ENCODE measurements at regions of chr7 and their contacts with region 1.

Region 1: DNA sequence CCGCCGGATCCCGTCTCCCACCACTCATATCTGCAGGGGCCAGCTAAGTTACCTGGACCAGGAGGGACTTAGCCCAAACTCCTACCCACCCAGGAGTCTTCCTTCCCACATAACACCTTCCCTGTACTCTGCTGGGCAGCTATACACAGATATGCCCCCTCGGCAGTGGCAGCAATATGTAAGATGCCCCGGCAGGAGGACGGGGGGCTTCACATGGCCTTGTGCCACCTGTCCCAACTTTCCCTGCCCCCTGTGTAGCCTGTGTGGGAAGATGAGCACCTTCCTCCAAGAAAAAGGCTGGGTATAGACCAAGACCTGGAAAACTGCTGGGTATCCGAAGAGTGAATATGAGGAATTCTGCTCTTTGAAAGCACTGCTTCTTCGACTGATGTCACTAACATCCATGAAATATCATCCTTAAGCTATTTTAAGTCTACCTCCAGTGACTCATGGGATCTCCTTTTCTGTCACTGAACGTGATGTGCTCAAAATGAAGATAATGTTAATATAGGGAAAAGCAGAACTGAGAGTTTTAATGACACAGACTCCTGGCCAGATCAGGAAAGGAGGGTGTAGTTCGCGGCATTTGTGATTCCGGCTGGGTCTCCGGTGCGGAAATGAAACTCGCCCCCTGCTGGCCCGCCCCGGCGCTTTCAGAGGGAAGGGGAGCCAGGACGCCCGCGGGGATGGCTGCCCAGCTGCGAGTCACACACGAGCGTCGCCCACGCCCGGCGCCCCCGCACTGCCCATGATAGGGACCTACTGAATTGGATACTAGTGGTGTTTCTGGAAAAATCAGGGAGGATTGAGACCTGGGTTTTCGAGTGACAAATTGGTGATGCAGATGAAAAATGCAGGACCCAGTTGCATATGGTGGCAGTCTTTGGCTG is 256.9 kb upstream of the NFE2L3 start:
- DNase-seq: peak in 1 of 2 experiments; percentile 87
- H3K4me3 ChIP-seq: peak overlapping the region; percentile 54 to 76 (median 62)
- H3K27ac ChIP-seq: no peak overlapping the region
- H3K4me1 ChIP-seq: peaks cover 0 to 7% (median 2%) of the 10 kb centered on the region in 4 experiments; a peak in 3 of 7 replicates
- H3K27me3 ChIP-seq: no peaks in the 10 kb centered on the region
- CTCF ChIP-seq: peak; percentile 50 to 65 (median 53)
- EP300 ChIP-seq: no peak
- POLR2A ChIP-seq: no peak
- RAD21 ChIP-seq: peak; percentile 15 to 43; a peak in 2 of 4 replicates

Region 2: DNA sequence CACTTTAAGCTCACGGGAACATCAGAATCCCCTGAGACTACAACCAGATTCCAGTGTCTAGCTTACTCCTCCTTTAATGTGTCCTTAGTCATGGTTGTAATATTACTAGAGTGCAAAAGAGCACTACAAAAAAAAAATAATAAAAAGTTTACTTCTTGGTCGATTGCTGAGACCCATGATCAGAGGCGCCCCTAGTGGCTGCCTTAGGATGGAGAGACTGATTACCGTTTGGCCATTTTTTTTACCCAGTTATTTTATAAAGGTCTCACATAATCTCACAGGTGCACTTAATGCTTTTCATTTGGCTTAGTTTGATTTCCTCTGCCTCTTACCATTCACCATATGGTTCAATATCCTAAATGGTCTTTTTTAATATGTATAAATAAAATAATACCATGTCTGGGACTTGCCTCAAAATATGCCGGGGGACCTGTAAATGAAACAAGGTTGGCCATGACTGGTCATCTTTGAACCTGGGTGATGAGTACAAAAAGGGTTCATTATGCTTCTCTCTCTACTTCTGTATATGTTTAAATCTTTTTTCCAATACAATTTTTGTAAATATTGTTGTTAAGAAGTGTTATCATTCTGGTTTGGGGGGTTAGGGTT is 74.6 kb before region 1 on chr7:
- CTCF ChIA-PET with region 1: no interaction called
- POLR2A ChIA-PET with region 1: no interaction called
- DNase-seq: no peak
- H3K4me3 ChIP-seq: no peak overlapping the region
- H3K27ac ChIP-seq: no peak overlapping the region
- H3K4me1 ChIP-seq: no peaks in the 10 kb centered on the region
- H3K27me3 ChIP-seq: no peaks in the 10 kb centered on the region
- CTCF ChIP-seq: peak; percentile 25 to 61 (median 50)
- EP300 ChIP-seq: no peak
- POLR2A ChIP-seq: no peak
- RAD21 ChIP-seq: peak; percentile 38 to 54; a peak in 3 of 4 replicates

Region 3: GRCh38 chr7:25844102-25844870 is 50.9 kb before region 1 on chr7:
- CTCF ChIA-PET with region 1: no interaction called
- POLR2A ChIA-PET with region 1: no interaction called
- DNase-seq: no peak
- H3K4me3 ChIP-seq: no peak overlapping the region
- H3K27ac ChIP-seq: no peak overlapping the region
- H3K4me1 ChIP-seq: no peaks in the 10 kb centered on the region; a peak in 1 of 7 replicates
- H3K27me3 ChIP-seq: no peaks in the 10 kb centered on the region
- CTCF ChIP-seq: no peak
- EP300 ChIP-seq: no peak
- POLR2A ChIP-seq: no peak
- RAD21 ChIP-seq: no peak

Region 4: DNA sequence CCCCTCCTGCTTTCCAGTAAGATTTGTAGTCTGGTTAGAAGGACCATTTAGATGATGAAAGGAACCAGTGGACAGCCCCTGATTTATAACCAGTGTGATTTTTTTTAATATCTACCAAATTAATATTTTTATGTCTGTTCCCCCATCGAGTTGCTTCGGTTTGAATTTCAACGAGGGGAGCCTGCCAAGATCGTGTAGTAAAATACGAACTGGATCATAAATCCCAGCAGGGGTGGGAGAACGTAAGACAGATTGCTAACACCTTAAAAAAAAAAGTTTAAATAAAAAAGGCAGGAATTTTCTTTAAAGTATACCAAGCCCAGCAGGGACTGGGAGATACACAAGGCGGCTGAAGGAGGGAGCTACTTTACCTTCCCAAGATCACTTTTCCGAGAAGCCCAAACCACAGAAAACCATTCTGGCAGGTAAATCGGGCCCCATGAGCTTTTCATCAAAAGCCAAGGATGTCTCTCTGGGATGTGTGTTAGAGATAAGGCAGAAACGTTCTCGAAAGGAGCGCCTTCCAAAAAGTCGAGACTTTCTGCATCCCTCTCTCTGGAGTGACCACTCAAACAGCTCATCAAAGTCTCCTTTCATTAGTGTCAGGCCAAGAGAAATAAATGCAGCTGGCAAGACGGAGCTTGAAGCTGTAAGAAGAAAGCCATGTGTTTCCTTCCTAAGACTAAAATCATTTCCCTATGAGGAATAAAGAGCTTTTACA is 13.7 kb before region 1 on chr7:
- CTCF ChIA-PET with region 1: interaction called, 12 read pairs
- POLR2A ChIA-PET with region 1: no interaction called
- DNase-seq: no peak
- H3K4me3 ChIP-seq: no peak overlapping the region
- H3K27ac ChIP-seq: no peak overlapping the region
- H3K4me1 ChIP-seq: no peaks in the 10 kb centered on the region
- H3K27me3 ChIP-seq: no peaks in the 10 kb centered on the region; a peak in 1 of 7 replicates
- CTCF ChIP-seq: no peak
- EP300 ChIP-seq: no peak
- POLR2A ChIP-seq: no peak
- RAD21 ChIP-seq: no peak

Region 5: DNA sequence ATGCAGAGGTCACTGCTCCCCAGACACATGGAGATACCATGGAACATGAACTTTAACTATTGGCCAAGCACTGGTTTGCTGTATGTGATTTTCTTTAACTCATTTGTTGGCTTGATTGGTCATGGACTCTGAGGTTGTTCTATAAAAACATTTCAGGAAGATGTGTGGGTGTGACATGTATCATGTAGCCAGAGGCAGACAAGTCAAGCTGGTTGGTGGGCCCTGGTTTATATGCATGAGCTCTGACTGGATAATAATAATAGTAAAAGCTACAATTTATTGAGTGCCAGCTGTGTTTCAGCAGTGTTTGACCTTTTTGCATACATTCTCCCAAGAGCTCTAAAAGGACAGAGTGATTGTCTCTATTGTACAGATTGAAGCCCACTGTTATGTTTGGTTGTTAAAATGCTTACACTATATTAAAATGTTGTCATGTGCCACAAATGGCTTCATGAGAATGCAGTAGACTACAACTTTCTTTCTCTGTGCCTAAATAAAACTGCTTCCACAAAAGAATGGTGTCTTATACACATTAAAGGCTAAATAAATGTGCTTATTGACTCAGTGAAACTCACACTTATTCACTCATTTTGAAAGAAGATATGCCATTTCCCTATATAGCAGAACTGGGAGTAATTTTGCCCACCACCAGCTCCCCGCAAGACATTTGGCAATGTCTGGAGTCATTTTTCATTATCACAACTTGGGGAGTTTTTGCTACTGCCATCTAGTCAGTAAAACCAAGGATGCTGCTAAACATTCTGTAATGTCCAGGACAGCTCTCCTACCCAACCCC is 13.2 kb after region 1 on chr7:
- CTCF ChIA-PET with region 1: interaction called, 36 read pairs
- POLR2A ChIA-PET with region 1: interaction called, 4 read pairs
- DNase-seq: no peak
- H3K4me3 ChIP-seq: no peak overlapping the region
- H3K27ac ChIP-seq: no peak overlapping the region
- H3K4me1 ChIP-seq: peaks cover 2 to 7% (median 4%) of the 10 kb centered on the region in 4 experiments; a peak in 4 of 7 replicates
- H3K27me3 ChIP-seq: no peaks in the 10 kb centered on the region
- CTCF ChIP-seq: no peak
- EP300 ChIP-seq: no peak
- POLR2A ChIP-seq: no peak
- RAD21 ChIP-seq: no peak

Region 6: DNA sequence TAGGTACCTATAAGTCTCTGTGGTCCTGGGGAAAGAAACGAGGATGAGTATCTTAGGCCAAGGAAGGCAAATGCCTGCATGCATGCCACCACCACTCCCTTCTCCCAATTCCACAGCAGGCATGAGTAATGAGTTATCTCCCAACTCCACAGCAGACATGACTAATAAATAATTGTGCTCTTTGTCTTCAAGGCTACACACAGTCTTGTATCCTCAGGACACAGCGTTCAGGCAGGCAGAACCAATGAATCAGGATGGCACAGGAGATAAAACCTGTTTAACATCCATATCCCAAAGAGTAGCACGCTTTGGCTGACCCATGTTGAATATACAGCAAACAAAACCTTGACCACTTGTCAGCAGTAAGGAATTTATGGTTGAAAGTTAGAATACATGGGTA is 27.1 kb after region 1 on chr7:
- CTCF ChIA-PET with region 1: no interaction called
- POLR2A ChIA-PET with region 1: no interaction called
- DNase-seq: no peak
- H3K4me3 ChIP-seq: no peak overlapping the region
- H3K27ac ChIP-seq: no peak overlapping the region
- H3K4me1 ChIP-seq: peaks cover 0 to 4% (median 0%) of the 10 kb centered on the region in 4 experiments; a peak in 1 of 7 replicates
- H3K27me3 ChIP-seq: no peaks in the 10 kb centered on the region
- CTCF ChIP-seq: no peak
- EP300 ChIP-seq: no peak
- POLR2A ChIP-seq: no peak
- RAD21 ChIP-seq: no peak

Region 7: DNA sequence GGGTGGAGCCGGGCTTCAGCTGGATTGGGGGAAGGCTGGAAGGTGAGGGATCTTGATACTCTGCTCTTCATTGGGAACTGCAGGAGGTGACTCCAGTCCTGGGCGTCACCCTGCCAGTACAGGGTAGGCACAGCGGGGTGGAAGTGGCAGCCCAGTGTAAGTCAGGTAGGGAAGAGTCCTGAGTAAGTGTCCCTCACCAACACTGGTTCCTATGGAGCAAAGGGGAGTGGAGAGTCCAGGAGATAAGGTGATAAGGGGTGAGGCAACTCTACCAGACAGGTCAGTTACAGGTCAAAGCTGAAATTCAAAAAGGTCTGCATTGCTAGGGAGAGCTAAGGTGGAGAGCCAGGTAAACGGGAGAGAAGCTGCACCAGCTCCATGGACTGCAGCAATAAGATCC is 111.3 kb after region 1 on chr7:
- CTCF ChIA-PET with region 1: no interaction called
- POLR2A ChIA-PET with region 1: no interaction called
- DNase-seq: no peak
- H3K4me3 ChIP-seq: no peak overlapping the region
- H3K27ac ChIP-seq: no peak overlapping the region
- H3K4me1 ChIP-seq: no peaks in the 10 kb centered on the region
- H3K27me3 ChIP-seq: no peaks in the 10 kb centered on the region; a peak in 2 of 7 replicates
- CTCF ChIP-seq: no peak
- EP300 ChIP-seq: no peak
- POLR2A ChIP-seq: no peak
- RAD21 ChIP-seq: no peak

Region 8: GRCh38 chr7:26061688-26062150 is 166.6 kb after region 1 on chr7:
- CTCF ChIA-PET with region 1: interaction called, 10 read pairs
- POLR2A ChIA-PET with region 1: interaction called, 3 read pairs
- DNase-seq: peak; percentile 53 to 87
- H3K4me3 ChIP-seq: no peak overlapping the region
- H3K27ac ChIP-seq: no peak overlapping the region
- H3K4me1 ChIP-seq: peaks cover 0 to 3% (median 2%) of the 10 kb centered on the region in 4 experiments; a peak in 3 of 7 replicates
- H3K27me3 ChIP-seq: no peaks in the 10 kb centered on the region
- CTCF ChIP-seq: peak; percentile 62 to 90 (median 80)
- EP300 ChIP-seq: no peak
- POLR2A ChIP-seq: no peak
- RAD21 ChIP-seq: peak; percentile 76 to 87

Region 9: GRCh38 chr7:26078437-26079336 is 183.5 kb after region 1 on chr7:
- CTCF ChIA-PET with region 1: interaction called, 21 read pairs
- POLR2A ChIA-PET with region 1: no interaction called
- DNase-seq: peak; percentile 36 to 87
- H3K4me3 ChIP-seq: peak overlapping the region in 1 of 4 experiments; percentile 3; a peak in 1 of 8 replicates
- H3K27ac ChIP-seq: no peak overlapping the region
- H3K4me1 ChIP-seq: peaks cover 1 to 7% (median 3%) of the 10 kb centered on the region in 4 experiments; a peak in 3 of 7 replicates
- H3K27me3 ChIP-seq: no peaks in the 10 kb centered on the region; a peak in 2 of 7 replicates
- CTCF ChIP-seq: peak; percentile 49 to 64 (median 56)
- EP300 ChIP-seq: no peak
- POLR2A ChIP-seq: no peak
- RAD21 ChIP-seq: peak; percentile 46 to 66; a peak in 3 of 4 replicates

Region 10: DNA sequence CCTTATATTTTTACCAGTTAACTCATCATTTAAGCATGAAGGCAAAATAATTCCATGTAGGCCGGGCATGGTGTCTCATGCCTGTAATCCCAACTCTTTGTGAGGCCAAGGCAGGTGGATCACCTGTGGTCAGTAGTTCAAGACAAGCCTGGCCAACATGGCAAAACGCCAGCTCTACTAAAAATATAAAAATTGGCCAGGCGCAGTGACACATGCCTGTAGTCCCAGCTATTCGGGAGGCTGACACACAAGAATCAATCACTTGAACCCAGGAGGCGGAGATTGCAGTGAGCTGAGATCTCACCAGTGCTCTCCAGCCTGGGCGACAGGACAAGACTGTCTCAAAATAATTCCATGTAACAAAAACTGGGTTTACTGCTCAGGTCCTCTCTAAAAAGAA is 287.1 kb after region 1 on chr7:
- CTCF ChIA-PET with region 1: interaction called, 14 read pairs
- POLR2A ChIA-PET with region 1: interaction called, 19 read pairs
- DNase-seq: no peak
- H3K4me3 ChIP-seq: no peak overlapping the region
- H3K27ac ChIP-seq: no peak overlapping the region
- H3K4me1 ChIP-seq: peaks cover 0 to 5% (median 0%) of the 10 kb centered on the region in 4 experiments; a peak in 1 of 7 replicates
- H3K27me3 ChIP-seq: no peaks in the 10 kb centered on the region
- CTCF ChIP-seq: no peak
- EP300 ChIP-seq: no peak
- POLR2A ChIP-seq: no peak
- RAD21 ChIP-seq: no peak

Region 11: DNA sequence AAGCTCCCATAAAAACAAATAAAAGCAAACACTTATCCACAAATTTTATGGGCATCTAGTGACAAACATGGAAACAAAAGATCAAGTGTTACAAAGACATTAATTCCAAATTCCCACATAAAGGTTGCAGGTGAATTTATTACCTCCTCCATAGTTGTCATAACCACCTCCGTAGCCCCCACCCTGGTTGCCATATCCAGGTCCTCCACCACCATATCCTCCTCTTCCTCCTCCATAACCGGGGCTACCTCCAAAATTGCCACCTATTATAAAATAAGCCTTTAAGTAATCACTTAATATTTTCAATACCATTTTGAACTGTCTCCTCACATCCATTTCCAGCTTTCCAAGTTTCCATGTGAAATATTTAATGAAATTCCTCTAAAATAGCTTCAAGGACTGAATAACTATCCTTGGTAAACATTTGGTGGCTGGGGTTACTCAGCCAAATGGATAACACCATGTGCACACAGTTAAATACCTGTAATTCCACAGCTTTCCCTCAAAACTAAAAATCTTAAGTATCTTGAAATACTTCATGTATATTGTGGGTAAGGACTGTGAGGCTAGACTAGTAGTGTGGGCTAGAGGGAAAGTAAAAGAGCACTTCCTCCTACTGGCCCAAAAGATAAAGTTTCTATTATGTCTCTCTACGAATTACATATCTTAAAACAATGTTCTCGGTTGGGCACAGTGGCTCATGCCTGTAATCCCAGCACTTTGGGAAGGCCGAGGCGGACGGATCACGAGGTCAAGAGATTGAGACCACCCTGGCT is 298.5 kb after region 1 on chr7:
- CTCF ChIA-PET with region 1: interaction called, 21 read pairs
- POLR2A ChIA-PET with region 1: interaction called, 19 read pairs
- DNase-seq: no peak
- H3K4me3 ChIP-seq: no peak overlapping the region
- H3K27ac ChIP-seq: no peak overlapping the region
- H3K4me1 ChIP-seq: peaks cover 0 to 6% (median 0%) of the 10 kb centered on the region in 4 experiments; a peak in 3 of 7 replicates
- H3K27me3 ChIP-seq: no peaks in the 10 kb centered on the region
- CTCF ChIP-seq: no peak
- EP300 ChIP-seq: no peak
- POLR2A ChIP-seq: peak in 1 of 2 experiments; percentile 34; a peak in 2 of 3 replicates
- RAD21 ChIP-seq: no peak

Measured in H1 (cell line).